ENCODE measurements at regions of chr22 and their contacts with region 1.

Region 1: GRCh38 chr22:29154364-29155048 is 51.2 kb upstream of the EMID1 start:
- DNase-seq: peak; percentile 77
- H3K4me3 Mint-ChIP-seq: no peak overlapping the region
- H3K27ac Mint-ChIP-seq: no peak overlapping the region
- H3K4me1 Mint-ChIP-seq: peaks cover 15% of the 10 kb centered on the region
- H3K27me3 Mint-ChIP-seq: peaks cover 22% of the 10 kb centered on the region

Region 2: DNA sequence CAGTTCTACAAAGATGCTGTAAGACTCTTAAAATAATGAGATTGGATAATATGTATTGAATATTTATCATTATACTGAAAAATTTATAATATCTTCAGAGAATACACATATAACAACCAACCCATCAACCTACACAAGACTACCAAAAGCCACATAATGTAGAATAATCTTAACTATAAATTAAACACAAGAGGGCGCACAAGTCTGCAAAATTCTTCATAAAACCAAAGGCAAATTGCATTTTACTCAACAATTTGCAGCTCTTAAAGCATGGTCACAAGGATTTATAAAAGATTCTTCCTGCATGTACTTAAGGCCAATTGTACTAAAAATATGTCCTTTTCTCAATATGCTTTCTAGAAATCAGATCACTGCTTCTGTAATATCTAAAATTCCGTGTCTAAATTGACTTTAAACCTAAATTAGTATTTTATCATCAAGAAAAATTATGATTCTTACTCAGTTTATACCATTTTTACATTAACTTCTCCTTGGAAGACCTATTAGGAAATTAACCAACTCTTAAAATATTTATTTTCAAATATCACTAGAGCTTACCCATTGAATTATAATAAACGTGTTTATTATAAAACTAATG is 553.9 kb before region 1 on chr22:
- CTCF ChIA-PET with region 1: interaction called, 10 read pairs
- POLR2A ChIA-PET with region 1: no interaction called
- DNase-seq: no peak
- H3K4me3 Mint-ChIP-seq: no peak overlapping the region
- H3K27ac Mint-ChIP-seq: no peak overlapping the region
- H3K4me1 Mint-ChIP-seq: no peaks in the 10 kb centered on the region
- H3K27me3 Mint-ChIP-seq: peaks cover 35% of the 10 kb centered on the region

Region 3: DNA sequence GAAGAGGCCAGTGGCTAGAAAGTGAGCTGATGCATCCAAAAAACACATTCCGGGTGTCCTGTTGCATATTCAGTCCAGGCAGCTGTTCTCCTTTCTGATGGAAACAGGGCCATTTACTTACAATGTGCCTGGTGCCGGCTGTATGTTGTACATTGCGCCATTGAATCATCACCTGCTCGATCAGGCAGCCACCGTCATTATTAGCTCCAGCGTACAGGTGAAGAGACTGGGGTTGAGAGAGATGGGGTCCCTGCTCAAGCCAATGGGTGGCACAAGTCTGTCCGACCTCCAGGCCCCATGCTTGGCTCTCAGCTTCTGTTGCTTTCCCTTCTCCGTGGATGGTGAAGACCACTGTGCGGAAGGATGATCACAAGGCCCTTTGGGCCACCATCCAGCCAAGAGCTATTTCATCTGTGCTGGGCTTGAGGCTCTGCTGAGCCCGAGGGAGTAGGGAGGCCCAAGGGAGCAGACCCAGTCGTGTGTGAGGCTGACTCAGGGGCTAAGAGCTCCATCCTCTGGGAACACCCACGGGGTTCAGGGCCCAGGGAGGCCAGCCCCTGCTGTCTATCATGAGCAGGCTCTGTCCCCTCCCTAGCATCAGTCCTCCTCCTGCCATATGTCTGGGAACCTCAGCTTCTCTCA is 30.5 kb after region 1 on chr22:
- CTCF ChIA-PET with region 1: no interaction called
- POLR2A ChIA-PET with region 1: no interaction called
- DNase-seq: no peak
- H3K4me3 Mint-ChIP-seq: no peak overlapping the region
- H3K27ac Mint-ChIP-seq: no peak overlapping the region
- H3K4me1 Mint-ChIP-seq: no peaks in the 10 kb centered on the region
- H3K27me3 Mint-ChIP-seq: peaks cover 12% of the 10 kb centered on the region

Region 4: GRCh38 chr22:29202212-29203192 is 48.0 kb after region 1 on chr22:
- CTCF ChIA-PET with region 1: interaction called, 12 read pairs
- POLR2A ChIA-PET with region 1: no interaction called
- DNase-seq: peak; percentile 78
- H3K4me3 Mint-ChIP-seq: peak overlapping the region; percentile 41
- H3K27ac Mint-ChIP-seq: peak overlapping the region; percentile 71
- H3K4me1 Mint-ChIP-seq: peaks cover 35% of the 10 kb centered on the region
- H3K27me3 Mint-ChIP-seq: peaks cover 50% of the 10 kb centered on the region

Region 5: GRCh38 chr22:29245637-29246385 is 91.3 kb after region 1 on chr22:
- CTCF ChIA-PET with region 1: interaction called, 20 read pairs
- POLR2A ChIA-PET with region 1: no interaction called
- DNase-seq: peak; percentile 75
- H3K4me3 Mint-ChIP-seq: no peak overlapping the region
- H3K27ac Mint-ChIP-seq: no peak overlapping the region
- H3K4me1 Mint-ChIP-seq: peaks cover 1% of the 10 kb centered on the region
- H3K27me3 Mint-ChIP-seq: peaks cover 20% of the 10 kb centered on the region

Region 6: DNA sequence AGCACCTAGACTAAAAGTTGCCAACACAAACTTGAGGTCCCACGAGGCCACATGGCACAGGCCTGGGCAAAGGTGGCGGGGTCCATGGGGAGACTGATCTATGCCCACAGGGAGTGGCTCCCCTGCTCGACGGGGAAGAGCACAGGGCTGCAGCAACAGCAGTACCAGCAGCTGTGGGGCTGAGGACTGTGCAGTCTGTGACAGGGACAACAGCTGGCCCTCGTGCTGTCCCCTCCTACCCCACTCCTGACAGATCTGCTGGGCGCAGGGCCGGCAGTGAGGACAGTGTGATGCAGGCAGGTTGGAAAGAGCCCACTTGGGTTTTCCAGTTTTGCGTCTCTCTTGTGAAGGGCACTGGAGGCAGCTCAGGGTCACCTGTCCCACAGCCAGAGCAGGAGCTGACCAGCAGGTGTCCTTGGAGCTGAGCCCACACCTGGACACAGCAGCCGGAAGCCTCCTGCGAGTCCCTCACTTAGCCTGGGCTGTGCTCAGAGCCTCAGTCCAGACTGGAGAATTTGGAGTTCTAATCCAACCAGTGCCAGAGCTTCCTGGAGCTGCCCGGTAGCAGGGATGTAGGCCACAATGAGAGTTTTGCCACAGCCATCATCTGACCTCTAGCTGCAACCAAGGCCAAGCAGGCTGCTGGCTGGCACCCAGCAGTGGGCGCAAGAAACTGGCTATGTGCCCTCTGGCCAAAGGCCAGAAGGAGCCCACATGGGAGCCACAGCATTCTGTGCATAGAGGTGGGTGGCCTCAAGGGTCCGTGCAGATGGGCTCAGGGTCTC is 148.4 kb after region 1 on chr22:
- CTCF ChIA-PET with region 1: no interaction called
- POLR2A ChIA-PET with region 1: no interaction called
- DNase-seq: no peak
- H3K4me3 Mint-ChIP-seq: no peak overlapping the region
- H3K27ac Mint-ChIP-seq: no peak overlapping the region
- H3K4me1 Mint-ChIP-seq: peaks cover 20% of the 10 kb centered on the region
- H3K27me3 Mint-ChIP-seq: peaks cover 4% of the 10 kb centered on the region